ENCODE measurements at regions of chr10 and their contacts with region 1.

Region 1: GRCh38 chr10:92880233-92880861 is 32.0 kb downstream of the EXOC6 start:
- DNase-seq: peak; percentile 37
- ATAC-seq: peak; percentile 81
- H3K4me3 ChIP-seq: no peak overlapping the region
- H3K27ac ChIP-seq: no peak overlapping the region
- H3K4me1 ChIP-seq: no peaks in the 10 kb centered on the region
- H3K27me3 ChIP-seq: no peaks in the 10 kb centered on the region
- CTCF ChIP-seq: peak; percentile 42 to 69 (median 64); a peak in 5 of 6 replicates
- POLR2A ChIP-seq: no peak
- RAD21 ChIP-seq: peak; percentile 79

Region 2: DNA sequence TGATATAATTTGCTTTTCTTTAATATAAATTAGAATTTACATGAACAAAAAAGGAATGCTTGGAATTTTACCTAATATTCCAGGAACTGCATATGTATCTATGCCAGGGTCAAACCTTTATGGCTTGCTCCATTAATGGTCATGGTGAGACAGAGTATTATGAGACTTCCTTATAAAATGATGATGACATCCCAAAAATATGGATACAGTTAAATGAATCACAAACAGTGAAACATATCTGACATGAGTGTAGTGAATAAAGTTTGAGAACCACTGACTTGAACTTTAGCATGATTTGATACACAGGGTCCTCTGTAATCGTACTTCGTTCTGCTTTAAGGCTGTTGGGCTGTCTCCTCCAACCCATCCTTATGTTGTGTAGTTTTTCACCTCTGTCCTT is 537.6 kb before region 1 on chr10:
- CTCF ChIA-PET with region 1: no interaction called
- POLR2A ChIA-PET with region 1: no interaction called
- RAD21 ChIA-PET with region 1: no interaction called
- intact Hi-C with region 1: no loop called
- DNase-seq: no peak
- ATAC-seq: no peak
- H3K4me3 ChIP-seq: no peak overlapping the region
- H3K27ac ChIP-seq: no peak overlapping the region
- H3K4me1 ChIP-seq: peaks cover 0 to 9% of the 10 kb centered on the region in 2 experiments; a peak in 1 of 4 replicates
- H3K27me3 ChIP-seq: no peaks in the 10 kb centered on the region
- CTCF ChIP-seq: no peak
- POLR2A ChIP-seq: no peak
- RAD21 ChIP-seq: no peak

Region 3: GRCh38 chr10:92592761-92593618 is 287.4 kb before region 1 on chr10 and contains the start of gene KIF11:
- CTCF ChIA-PET with region 1: interaction called, 3 read pairs
- POLR2A ChIA-PET with region 1: no interaction called
- RAD21 ChIA-PET with region 1: no interaction called
- intact Hi-C with region 1: loop called (anchors 2 kb)
- DNase-seq: peak; percentile 93
- ATAC-seq: peak; percentile 78
- H3K4me3 ChIP-seq: peak within 1 kb of the TSS; percentile 84 to 92
- H3K27ac ChIP-seq: peak within 1 kb of the TSS; percentile 86
- H3K4me1 ChIP-seq: peaks cover 6 to 19% of the 10 kb centered on the region in 2 experiments; a peak in 3 of 4 replicates
- H3K27me3 ChIP-seq: no peaks in the 10 kb centered on the region
- CTCF ChIP-seq: no peak
- POLR2A ChIP-seq: peak; percentile 98
- RAD21 ChIP-seq: no peak
- total RNA-seq, gene KIF11: 33.8 TPM

Region 4: GRCh38 chr10:92839191-92840085 is 40.9 kb before region 1 on chr10:
- CTCF ChIA-PET with region 1: interaction called, 10 read pairs
- POLR2A ChIA-PET with region 1: no interaction called
- RAD21 ChIA-PET with region 1: interaction called in 1 of 2 experiments, 4 read pairs
- intact Hi-C with region 1: loop called (anchors 5 kb)
- DNase-seq: no peak
- ATAC-seq: no peak
- H3K4me3 ChIP-seq: no peak overlapping the region
- H3K27ac ChIP-seq: no peak overlapping the region
- H3K4me1 ChIP-seq: peaks cover 0 to 9% of the 10 kb centered on the region in 2 experiments; a peak in 1 of 4 replicates
- H3K27me3 ChIP-seq: no peaks in the 10 kb centered on the region
- CTCF ChIP-seq: 0 out of 6 replicates have a peak, but pooled peaks of 1 of the 3 experiments have one; percentile 18
- POLR2A ChIP-seq: no peak
- RAD21 ChIP-seq: no peak

Region 5: GRCh38 chr10:93074147-93074596 is 193.8 kb after region 1 on chr10:
- CTCF ChIA-PET with region 1: no interaction called
- POLR2A ChIA-PET with region 1: no interaction called
- RAD21 ChIA-PET with region 1: no interaction called
- intact Hi-C with region 1: loop called (anchors 10 kb)
- DNase-seq: no peak
- ATAC-seq: peak; percentile 74
- H3K4me3 ChIP-seq: peak overlapping the region; percentile 42 to 60
- H3K27ac ChIP-seq: no peak overlapping the region
- H3K4me1 ChIP-seq: peaks cover 8 to 13% of the 10 kb centered on the region in 2 experiments; a peak in 2 of 4 replicates
- H3K27me3 ChIP-seq: no peaks in the 10 kb centered on the region
- CTCF ChIP-seq: peak; percentile 6 to 29 (median 18); a peak in 2 of 6 replicates
- POLR2A ChIP-seq: no peak
- RAD21 ChIP-seq: no peak; the same call in 1 of the 2 replicates

Region 6: GRCh38 chr10:93509816-93510215 is 629.5 kb after region 1 on chr10:
- CTCF ChIA-PET with region 1: interaction called, 4 read pairs
- POLR2A ChIA-PET with region 1: no interaction called
- RAD21 ChIA-PET with region 1: no interaction called
- intact Hi-C with region 1: loop called (anchors 2 kb)
- DNase-seq: no peak
- ATAC-seq: no peak
- H3K4me3 ChIP-seq: no peak overlapping the region
- H3K27ac ChIP-seq: no peak overlapping the region
- H3K4me1 ChIP-seq: no peaks in the 10 kb centered on the region
- H3K27me3 ChIP-seq: no peaks in the 10 kb centered on the region
- CTCF ChIP-seq: no peak
- POLR2A ChIP-seq: no peak
- RAD21 ChIP-seq: no peak

Measured in HCT116 (cell line).